Colonic mucosa (tissue), 4 donors: ENCODE measurements at regions of chr3 and their contacts with region 1.

Region 1: DNA sequence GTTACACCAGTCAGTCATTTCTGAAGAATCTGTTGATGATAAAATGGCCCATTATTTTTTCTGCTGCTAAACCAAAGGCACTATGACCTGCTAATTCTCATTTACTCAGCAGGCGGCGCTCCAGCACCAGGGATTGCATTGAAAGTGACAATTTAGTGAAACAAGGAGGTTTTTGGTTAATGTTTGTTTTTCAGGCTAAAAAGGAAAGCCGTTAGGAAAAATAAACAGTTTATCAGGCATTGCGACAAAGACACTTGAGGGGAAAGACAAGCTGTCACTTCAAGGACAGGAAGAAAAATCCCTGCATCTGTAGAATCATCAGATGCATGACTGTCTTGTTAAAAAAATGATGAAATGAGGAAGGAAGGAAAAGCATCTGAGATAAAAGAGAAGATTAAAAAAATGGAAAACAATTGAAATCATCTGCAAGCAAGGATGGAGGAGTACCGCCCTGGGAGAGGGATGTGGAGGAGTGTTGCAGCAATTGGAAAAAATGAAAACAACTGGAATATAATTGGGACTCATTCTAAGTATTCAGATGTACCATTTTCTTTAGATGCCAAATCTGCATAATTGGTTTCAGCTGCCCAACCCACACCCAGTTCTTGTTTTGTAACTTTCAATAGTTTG is 54.0 kb downstream of the NR1D2 start:
- DNase-seq: peak; percentile 79
- H3K4me3 ChIP-seq: no peak overlapping the region
- H3K27ac ChIP-seq: no peak overlapping the region
- H3K4me1 ChIP-seq: no peaks in the 10 kb centered on the region
- H3K27me3 ChIP-seq: no peaks in the 10 kb centered on the region
- CTCF ChIP-seq: peak; percentile 75

Region 2: GRCh38 chr3:23685484-23686258 is 313.5 kb before region 1 on chr3:
- intact Hi-C with region 1: no loop called
- DNase-seq: peak; percentile 91
- H3K4me3 ChIP-seq: no peak overlapping the region
- H3K27ac ChIP-seq: peak overlapping the region; percentile 3
- H3K4me1 ChIP-seq: no peaks in the 10 kb centered on the region
- H3K27me3 ChIP-seq: no peaks in the 10 kb centered on the region
- CTCF ChIP-seq: no peak

Region 3: GRCh38 chr3:23845326-23846221 is 153.6 kb before region 1 on chr3:
- intact Hi-C with region 1: no loop called
- DNase-seq: no peak
- H3K4me3 ChIP-seq: no peak overlapping the region
- H3K27ac ChIP-seq: no peak overlapping the region
- H3K4me1 ChIP-seq: no peaks in the 10 kb centered on the region
- H3K27me3 ChIP-seq: no peaks in the 10 kb centered on the region
- CTCF ChIP-seq: no peak

Region 4: DNA sequence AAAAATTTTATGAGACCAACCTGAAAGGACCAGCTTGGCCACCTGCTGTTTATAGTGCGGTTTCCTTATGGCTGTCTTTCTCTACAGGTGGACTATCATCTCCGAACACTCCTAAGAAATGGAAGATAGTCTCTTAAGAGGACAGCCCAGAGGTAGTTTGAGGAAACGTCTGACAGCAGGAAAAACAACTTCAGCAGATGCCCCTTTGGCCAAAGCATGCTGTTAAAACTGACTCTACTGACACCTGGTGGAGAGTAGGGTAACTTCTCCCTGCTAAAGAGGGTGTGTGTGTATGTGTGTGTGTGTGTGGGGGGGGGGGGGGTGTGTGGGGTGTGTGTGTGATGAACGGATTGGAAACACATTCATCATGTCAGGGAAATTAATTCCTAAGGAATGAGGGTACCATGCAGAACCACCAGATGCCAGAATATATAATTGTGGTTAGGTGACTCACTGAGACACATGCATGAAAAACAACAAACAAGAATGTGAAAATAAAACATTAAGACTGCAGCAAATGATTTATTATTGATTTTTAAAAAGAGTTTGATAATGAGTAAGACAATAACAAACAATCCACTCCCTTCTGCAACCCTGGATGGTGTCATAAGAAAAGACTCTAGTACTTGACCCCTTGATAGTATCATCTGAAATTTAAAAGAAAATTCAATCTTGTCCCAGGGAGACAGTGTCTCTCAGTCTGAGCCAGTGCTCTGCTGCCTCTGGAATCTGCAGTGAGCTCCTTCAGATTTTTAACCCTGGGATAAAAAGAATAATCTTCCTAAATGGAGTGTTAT is 239.0 kb after region 1 on chr3:
- intact Hi-C with region 1: loop called (anchors 10 kb)
- DNase-seq: peak; percentile 69
- H3K4me3 ChIP-seq: no peak overlapping the region
- H3K27ac ChIP-seq: no peak overlapping the region
- H3K4me1 ChIP-seq: no peaks in the 10 kb centered on the region
- H3K27me3 ChIP-seq: no peaks in the 10 kb centered on the region
- CTCF ChIP-seq: peak; percentile 41